Activated CD4-positive, alpha-beta T cell treated with anti-CD3 and anti-CD28 coated beads for 36 hours (primary cell): ENCODE measurements at regions of chr5 and their contacts with region 1.

Region 1: DNA sequence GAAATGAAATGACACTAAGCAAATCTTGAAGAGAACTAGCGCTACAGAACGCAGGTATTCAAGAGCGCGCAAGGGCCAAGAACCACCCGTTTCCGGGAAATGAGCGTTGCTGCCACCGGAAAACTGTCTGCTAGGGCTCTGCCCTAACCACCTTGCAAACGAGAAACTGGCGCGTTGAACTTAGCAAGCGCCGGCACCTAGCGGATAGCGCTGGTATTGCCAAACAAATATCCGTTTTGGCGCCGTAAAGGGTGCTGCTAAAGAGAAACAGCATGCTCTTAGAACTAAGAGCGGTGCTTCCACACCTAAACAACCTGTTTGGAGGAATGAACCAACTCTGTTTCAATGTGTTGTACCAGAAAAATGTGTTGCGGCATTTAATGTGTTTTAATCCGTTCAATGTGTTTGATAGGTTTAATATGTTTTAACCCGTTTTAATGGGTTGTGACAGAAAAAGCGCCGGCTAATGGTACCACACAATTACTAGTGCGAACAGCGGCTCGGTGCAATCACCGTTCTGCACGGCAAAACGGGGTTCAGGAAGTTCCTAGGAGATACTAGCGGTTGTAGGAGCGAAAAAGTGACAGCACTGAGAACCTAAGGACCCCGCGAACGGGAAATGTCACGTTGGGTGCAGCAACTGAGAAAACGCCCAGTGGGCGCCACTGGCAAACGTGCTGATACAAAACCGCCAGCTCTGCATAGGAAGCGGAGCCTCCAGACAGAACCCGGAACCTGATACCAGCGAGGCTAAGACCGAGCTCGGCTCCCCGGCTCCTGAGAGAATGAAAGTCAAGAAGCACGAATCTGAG is at the start of gene ANXA2R:
- DNase-seq: peak; percentile 96
- ATAC-seq: peak; percentile 56
- H3K4me3 Mint-ChIP-seq: peak within 1 kb of the TSS; percentile 81
- H3K27ac Mint-ChIP-seq: peak within 1 kb of the TSS; percentile 94
- H3K4me1 Mint-ChIP-seq: peaks cover 39% of the 10 kb centered on the region
- H3K27me3 Mint-ChIP-seq: no peaks in the 10 kb centered on the region
- total RNA-seq, gene ANXA2R: 3.2 to 4.6 TPM

Region 2: GRCh38 chr5:41903892-41904799 is 1136.3 kb before region 1 on chr5 and contains the start of gene RIMOC1:
- CTCF ChIA-PET with region 1: no interaction called
- POLR2A ChIA-PET with region 1: no interaction called
- intact Hi-C with region 1: loop called in 1 of 2 experiments (anchors 10 kb)
- DNase-seq: peak; percentile 98
- ATAC-seq: peak; percentile 97
- H3K4me3 Mint-ChIP-seq: peak within 1 kb of the TSS; percentile 91
- H3K27ac Mint-ChIP-seq: peak within 1 kb of the TSS; percentile 98
- H3K4me1 Mint-ChIP-seq: peaks cover 47% of the 10 kb centered on the region
- H3K27me3 Mint-ChIP-seq: no peaks in the 10 kb centered on the region
- total RNA-seq, gene RIMOC1: 25.4 to 26.7 TPM

Region 3: DNA sequence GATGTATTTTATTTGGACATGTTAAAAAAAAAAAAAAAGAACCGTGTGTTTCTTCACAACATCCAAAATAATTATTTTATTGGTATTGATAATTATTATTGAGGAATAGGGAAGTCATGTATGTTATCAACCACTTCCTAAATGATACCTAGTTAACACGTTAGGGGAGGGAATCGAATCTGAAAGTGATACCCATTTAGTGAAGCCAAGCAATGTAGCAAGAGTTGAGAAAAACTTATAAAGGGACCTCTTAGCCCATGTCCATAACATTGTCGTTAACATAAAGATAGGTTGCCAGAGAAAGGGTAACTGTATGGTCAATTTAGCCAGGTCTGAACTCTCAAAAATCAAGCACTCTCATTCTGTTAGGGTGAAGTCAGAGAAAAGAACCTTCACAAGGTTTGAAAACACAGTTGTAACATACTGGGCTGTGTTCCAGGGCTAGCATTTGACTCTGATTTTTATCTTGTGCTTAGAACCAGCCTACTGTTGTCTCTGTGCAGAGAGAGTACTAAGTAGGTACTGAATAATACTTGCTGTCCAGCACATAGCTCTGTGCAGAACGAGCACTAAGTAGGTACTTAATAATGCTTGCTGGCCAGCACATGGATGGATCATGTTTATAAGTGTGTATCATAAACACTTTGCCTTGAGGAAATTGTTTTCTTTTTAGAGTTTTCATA is 556.9 kb before region 1 on chr5:
- CTCF ChIA-PET with region 1: no interaction called
- POLR2A ChIA-PET with region 1: no interaction called
- intact Hi-C with region 1: no loop called
- DNase-seq: no peak
- ATAC-seq: no peak
- H3K4me3 Mint-ChIP-seq: no peak overlapping the region
- H3K27ac Mint-ChIP-seq: no peak overlapping the region
- H3K4me1 Mint-ChIP-seq: no peaks in the 10 kb centered on the region
- H3K27me3 Mint-ChIP-seq: peaks cover 2% of the 10 kb centered on the region

Region 4: GRCh38 chr5:42898760-42899159 is 141.7 kb before region 1 on chr5:
- CTCF ChIA-PET with region 1: no interaction called
- POLR2A ChIA-PET with region 1: no interaction called
- intact Hi-C with region 1: no loop called
- DNase-seq: no peak
- ATAC-seq: no peak
- H3K4me3 Mint-ChIP-seq: no peak overlapping the region
- H3K27ac Mint-ChIP-seq: no peak overlapping the region
- H3K4me1 Mint-ChIP-seq: no peaks in the 10 kb centered on the region
- H3K27me3 Mint-ChIP-seq: peaks cover 8% of the 10 kb centered on the region

Region 5: GRCh38 chr5:42908509-42909488 is 131.7 kb before region 1 on chr5:
- CTCF ChIA-PET with region 1: interaction called, 26 read pairs
- POLR2A ChIA-PET with region 1: interaction called, 12 read pairs
- intact Hi-C with region 1: loop called (anchors 1 kb)
- DNase-seq: peak; percentile 95
- ATAC-seq: peak; percentile 95
- H3K4me3 Mint-ChIP-seq: peak overlapping the region; percentile 75
- H3K27ac Mint-ChIP-seq: peak overlapping the region; percentile 48
- H3K4me1 Mint-ChIP-seq: peaks cover 14% of the 10 kb centered on the region
- H3K27me3 Mint-ChIP-seq: peaks cover 8% of the 10 kb centered on the region

Region 6: GRCh38 chr5:43008369-43009153 is 31.9 kb before region 1 on chr5:
- CTCF ChIA-PET with region 1: interaction called, 40 read pairs
- POLR2A ChIA-PET with region 1: interaction called, 5 read pairs
- intact Hi-C with region 1: loop called (anchors 1 kb)
- DNase-seq: peak; percentile 94
- ATAC-seq: peak; percentile 64
- H3K4me3 Mint-ChIP-seq: peak overlapping the region; percentile 76
- H3K27ac Mint-ChIP-seq: peak overlapping the region; percentile 94
- H3K4me1 Mint-ChIP-seq: peaks cover 21% of the 10 kb centered on the region
- H3K27me3 Mint-ChIP-seq: no peaks in the 10 kb centered on the region

Region 7: DNA sequence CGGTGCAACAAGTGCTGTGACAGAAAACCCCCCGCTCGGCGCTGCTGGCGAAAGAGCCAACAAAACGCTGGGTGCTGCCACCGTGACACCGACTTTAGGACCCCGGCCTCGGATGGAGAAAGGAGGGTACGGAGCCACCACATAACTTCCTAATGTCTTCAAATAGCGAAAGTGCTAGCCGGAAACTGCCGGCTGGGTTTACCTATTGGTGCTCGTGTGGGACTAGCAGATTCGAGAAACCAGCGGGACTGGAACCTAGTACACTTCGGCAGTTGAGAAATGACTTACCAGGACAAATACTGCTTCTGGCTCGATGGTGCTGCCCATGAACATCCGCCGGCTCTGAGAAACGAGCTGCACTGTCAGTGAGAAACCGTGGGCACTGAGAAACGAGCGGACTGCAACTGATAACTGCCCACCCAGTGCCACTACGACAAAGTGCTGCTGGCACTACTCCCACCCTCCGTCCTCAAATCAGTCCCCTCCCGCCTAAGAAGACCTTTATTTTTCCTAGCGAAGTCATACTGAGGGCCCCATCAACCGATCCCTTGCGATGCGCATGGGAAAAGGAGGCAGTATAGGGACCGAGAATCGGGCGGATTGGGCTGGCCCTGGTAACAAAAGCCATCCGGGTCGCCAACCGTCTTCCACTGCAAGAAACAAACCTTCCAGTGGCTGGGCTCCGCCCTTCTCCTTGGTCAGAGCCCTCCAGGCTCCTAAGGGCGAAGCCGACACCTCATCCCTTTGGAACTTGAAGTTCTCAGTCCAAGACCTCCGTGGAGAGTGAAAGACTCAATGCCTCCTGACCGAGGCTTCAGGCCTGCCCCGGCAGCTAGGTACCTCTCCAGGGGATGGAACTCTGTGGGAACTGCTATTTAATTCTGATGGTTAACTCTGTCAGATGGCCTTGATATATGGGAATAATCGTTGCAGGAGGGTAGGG is 26.6 kb after region 1 on chr5:
- CTCF ChIA-PET with region 1: interaction called, 47 read pairs
- POLR2A ChIA-PET with region 1: interaction called, 19 read pairs
- intact Hi-C with region 1: loop called (anchors 1 kb)
- DNase-seq: peak; percentile 91
- ATAC-seq: peak; percentile 51
- H3K4me3 Mint-ChIP-seq: peak overlapping the region; percentile 97
- H3K27ac Mint-ChIP-seq: peak overlapping the region; percentile 99
- H3K4me1 Mint-ChIP-seq: peaks cover 37% of the 10 kb centered on the region
- H3K27me3 Mint-ChIP-seq: no peaks in the 10 kb centered on the region

Region 8: GRCh38 chr5:43514816-43515677 is 474.6 kb after region 1 on chr5 and contains the start of gene C5orf34:
- CTCF ChIA-PET with region 1: no interaction called
- POLR2A ChIA-PET with region 1: no interaction called
- intact Hi-C with region 1: loop called in 1 of 2 experiments (anchors 1 kb)
- DNase-seq: peak; percentile 97
- ATAC-seq: peak; percentile 93
- H3K4me3 Mint-ChIP-seq: peak within 1 kb of the TSS; percentile 89
- H3K27ac Mint-ChIP-seq: peak within 1 kb of the TSS; percentile 99
- H3K4me1 Mint-ChIP-seq: peaks cover 23% of the 10 kb centered on the region
- H3K27me3 Mint-ChIP-seq: no peaks in the 10 kb centered on the region
- total RNA-seq, gene C5orf34: 14.4 to 16.8 TPM